Naive thymus-derived CD4-positive, alpha-beta T cell (primary cell): ENCODE measurements at regions of chr4 and their contacts with region 1.

Region 1: DNA sequence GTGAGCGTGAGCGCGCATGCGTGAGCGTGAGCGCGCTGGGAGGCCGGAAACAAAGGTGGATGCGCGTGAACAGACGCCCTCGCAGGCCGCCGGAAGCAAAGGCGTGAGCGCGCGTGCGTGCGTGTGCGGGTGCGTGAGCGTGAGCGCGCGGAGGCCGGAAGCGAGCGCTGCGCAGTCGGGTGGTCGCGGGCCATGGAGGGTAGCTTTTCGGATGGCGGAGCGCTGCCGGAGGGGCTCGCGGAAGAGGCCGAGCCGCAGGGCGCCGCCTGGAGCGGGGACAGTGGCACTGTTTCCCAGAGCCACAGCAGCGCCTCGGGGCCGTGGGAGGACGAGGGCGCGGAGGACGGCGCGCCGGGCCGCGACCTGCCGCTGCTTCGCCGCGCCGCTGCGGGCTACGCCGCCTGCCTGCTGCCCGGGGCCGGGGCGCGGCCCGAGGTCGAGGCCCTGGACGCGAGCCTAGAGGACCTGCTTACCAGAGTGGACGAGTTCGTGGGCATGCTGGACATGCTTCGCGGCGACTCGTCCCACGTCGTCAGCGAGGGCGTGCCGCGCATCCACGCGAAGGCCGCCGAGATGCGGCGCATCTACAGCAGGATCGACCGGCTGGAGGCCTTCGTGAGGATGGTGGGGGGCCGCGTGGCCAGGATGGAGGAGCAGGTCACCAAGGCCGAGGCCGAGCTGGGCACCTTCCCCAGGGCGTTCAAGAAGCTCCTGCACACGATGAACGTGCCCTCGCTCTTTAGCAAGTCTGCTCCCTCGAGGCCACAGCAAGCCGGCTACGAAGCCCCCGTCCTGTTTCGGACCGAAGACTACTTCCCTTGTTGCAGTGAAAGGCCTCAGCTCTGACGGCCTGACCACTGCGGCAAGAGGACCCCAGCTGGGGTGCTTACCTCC is at the start of gene BLOC1S4:
- DNase-seq: peak; percentile 86 to 95 (median 91)
- ATAC-seq: peak; percentile 92
- H3K4me3 ChIP-seq: peak within 1 kb of the TSS; percentile 86
- H3K4me3 Mint-ChIP-seq: peak within 1 kb of the TSS; percentile 89 to 99 (median 95)
- H3K27ac ChIP-seq: peak within 1 kb of the TSS; percentile 90
- H3K27ac Mint-ChIP-seq: peak within 1 kb of the TSS; percentile 94 to 100 (median 97)
- H3K4me1 ChIP-seq: peaks cover 19 to 20% of the 10 kb centered on the region in 2 donors
- H3K4me1 Mint-ChIP-seq: peaks cover 22 to 52% (median 36%) of the 10 kb centered on the region in 7 donors
- H3K27me3 ChIP-seq: no peaks in the 10 kb centered on the region
- H3K27me3 Mint-ChIP-seq: peaks cover 0 to 8% (median 0%) of the 10 kb centered on the region in 5 donors
- total RNA-seq, gene BLOC1S4: 18.7 to 45.9 (median 25.0) TPM

Region 2: DNA sequence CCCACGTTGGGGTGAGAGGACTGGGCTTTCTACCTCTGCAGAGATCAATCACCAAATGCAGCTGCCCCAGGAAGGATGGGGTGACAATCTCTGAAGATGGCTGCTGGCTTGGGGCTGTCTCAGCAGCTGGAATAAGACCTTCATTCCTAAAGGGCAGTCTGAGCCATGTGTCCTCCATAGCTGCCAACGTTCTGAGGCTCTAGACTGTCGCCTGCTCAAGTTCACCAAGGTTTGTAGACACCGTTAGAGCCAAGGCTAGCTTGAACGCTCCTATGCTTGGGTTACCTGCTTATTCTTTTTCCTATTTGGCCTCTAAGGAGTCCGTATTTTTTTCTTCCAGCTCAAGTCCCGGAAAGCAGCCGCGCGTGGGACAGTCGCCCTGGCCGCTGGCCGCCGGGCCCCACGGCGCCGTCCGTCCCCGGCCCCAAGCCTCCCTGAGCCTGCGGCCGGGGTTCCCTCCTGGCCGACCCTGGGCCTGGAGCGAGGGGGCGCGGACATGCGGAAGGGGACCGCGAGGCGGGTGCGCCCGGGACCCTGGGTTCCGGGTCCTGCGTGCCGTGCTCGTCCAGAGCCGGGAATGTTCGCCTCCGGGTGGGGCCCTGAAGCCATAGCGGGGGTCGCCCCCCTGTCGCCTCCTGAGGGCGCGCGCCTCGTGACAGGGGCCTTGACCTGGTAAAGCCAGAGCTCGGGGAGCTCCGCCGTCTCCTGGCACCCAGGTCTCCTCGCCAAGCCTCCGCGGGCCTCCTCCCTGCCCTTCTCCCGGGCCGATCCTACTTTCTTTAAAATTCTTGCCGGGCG is 52.5 kb before region 1 on chr4:
- CTCF ChIA-PET with region 1: no interaction called
- POLR2A ChIA-PET with region 1: interaction called, 15 read pairs
- intact Hi-C with region 1: no loop called
- DNase-seq: no peak
- ATAC-seq: no peak
- H3K4me3 ChIP-seq: peak overlapping the region; percentile 35
- H3K4me3 Mint-ChIP-seq: peak overlapping the region in 7 of 10 donors; percentile 12 to 81 (median 38)
- H3K27ac ChIP-seq: no peak overlapping the region
- H3K27ac Mint-ChIP-seq: peak overlapping the region in 1 of 9 donors; percentile 55
- H3K4me1 ChIP-seq: peaks cover 4 to 12% of the 10 kb centered on the region in 2 donors
- H3K4me1 Mint-ChIP-seq: peaks cover 0 to 9% (median 5%) of the 10 kb centered on the region in 7 donors
- H3K27me3 ChIP-seq: peaks cover 0 to 2% of the 10 kb centered on the region in 2 donors
- H3K27me3 Mint-ChIP-seq: peaks cover 0 to 49% (median 0%) of the 10 kb centered on the region in 5 donors

Region 3: DNA sequence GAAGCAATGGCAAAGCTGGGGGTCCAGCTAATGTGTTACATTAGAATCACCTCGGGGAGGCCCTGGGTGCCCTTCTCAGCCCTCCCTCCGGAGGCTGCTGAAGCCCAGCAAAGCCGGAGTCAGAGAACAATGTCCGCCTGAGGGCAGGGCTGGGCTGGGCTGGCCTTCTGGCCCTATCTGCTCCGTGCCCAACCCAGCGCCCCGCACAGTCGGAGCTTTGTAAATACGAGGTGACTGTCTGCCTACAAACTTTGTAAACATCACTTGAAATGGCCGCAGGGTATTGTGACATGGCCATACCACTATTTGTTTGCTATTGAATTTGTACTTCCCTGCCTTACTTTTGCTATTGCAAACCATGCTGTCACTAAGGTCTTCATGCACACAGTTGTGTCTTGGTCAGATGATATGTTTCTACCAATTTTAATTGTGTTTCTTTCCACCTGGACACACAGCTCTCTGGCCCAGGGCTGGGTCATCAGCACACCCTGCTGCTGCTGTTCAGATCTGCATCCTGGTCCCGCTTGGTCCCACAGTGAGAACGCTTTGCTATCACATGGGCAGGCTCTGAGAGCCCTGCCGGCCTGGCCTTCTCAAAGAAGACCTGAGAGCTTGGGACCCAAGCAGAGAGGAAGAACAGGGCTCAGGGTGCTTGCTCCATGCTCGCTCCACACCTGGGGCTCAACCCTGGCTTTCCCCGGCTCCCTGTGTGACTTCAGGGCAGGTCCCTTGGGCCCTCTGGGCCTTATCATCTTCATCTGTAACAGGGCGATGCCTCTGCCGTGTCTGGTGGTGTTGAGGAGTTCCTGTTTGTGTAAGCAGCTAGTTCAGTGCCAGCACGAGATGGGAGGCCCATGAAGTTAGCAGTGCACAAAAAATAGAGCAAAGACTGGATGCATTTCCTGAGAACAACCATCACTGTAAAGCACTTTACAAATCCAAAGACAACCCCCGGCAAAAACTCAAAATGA is 20.3 kb before region 1 on chr4:
- CTCF ChIA-PET with region 1: interaction called, 6 read pairs
- POLR2A ChIA-PET with region 1: interaction called, 552 read pairs
- intact Hi-C with region 1: loop called in 1 of 2 experiments (anchors 1 kb)
- DNase-seq: peak in 8 of 9 donors; percentile 53 to 82 (median 75)
- ATAC-seq: peak; percentile 89
- H3K4me3 ChIP-seq: peak overlapping the region; percentile 17
- H3K4me3 Mint-ChIP-seq: peak overlapping the region; percentile 42 to 84 (median 74)
- H3K27ac ChIP-seq: peak overlapping the region; percentile 77
- H3K27ac Mint-ChIP-seq: peak overlapping the region; percentile 93 to 99 (median 97)
- H3K4me1 ChIP-seq: peaks cover 84 to 85% of the 10 kb centered on the region in 2 donors
- H3K4me1 Mint-ChIP-seq: peaks cover 59 to 89% (median 82%) of the 10 kb centered on the region in 7 donors
- H3K27me3 ChIP-seq: no peaks in the 10 kb centered on the region
- H3K27me3 Mint-ChIP-seq: no peaks in the 10 kb centered on the region

Region 4: GRCh38 chr4:6974138-6974848 is 258.0 kb after region 1 on chr4:
- CTCF ChIA-PET with region 1: interaction called, 9 read pairs
- POLR2A ChIA-PET with region 1: interaction called, 4 read pairs
- intact Hi-C with region 1: loop called in 1 of 2 experiments (anchors 5 kb)
- DNase-seq: peak; percentile 55 to 82 (median 74)
- ATAC-seq: peak; percentile 100
- H3K4me3 ChIP-seq: no peak overlapping the region
- H3K4me3 Mint-ChIP-seq: peak overlapping the region in 3 of 10 donors; percentile 11 to 45 (median 18)
- H3K27ac ChIP-seq: no peak overlapping the region
- H3K27ac Mint-ChIP-seq: peak overlapping the region in 5 of 9 donors; percentile 43 to 86 (median 69)
- H3K4me1 ChIP-seq: peaks cover 0 to 9% of the 10 kb centered on the region in 2 donors
- H3K4me1 Mint-ChIP-seq: peaks cover 5 to 38% (median 22%) of the 10 kb centered on the region in 7 donors
- H3K27me3 ChIP-seq: no peaks in the 10 kb centered on the region
- H3K27me3 Mint-ChIP-seq: no peaks in the 10 kb centered on the region

Region 5: DNA sequence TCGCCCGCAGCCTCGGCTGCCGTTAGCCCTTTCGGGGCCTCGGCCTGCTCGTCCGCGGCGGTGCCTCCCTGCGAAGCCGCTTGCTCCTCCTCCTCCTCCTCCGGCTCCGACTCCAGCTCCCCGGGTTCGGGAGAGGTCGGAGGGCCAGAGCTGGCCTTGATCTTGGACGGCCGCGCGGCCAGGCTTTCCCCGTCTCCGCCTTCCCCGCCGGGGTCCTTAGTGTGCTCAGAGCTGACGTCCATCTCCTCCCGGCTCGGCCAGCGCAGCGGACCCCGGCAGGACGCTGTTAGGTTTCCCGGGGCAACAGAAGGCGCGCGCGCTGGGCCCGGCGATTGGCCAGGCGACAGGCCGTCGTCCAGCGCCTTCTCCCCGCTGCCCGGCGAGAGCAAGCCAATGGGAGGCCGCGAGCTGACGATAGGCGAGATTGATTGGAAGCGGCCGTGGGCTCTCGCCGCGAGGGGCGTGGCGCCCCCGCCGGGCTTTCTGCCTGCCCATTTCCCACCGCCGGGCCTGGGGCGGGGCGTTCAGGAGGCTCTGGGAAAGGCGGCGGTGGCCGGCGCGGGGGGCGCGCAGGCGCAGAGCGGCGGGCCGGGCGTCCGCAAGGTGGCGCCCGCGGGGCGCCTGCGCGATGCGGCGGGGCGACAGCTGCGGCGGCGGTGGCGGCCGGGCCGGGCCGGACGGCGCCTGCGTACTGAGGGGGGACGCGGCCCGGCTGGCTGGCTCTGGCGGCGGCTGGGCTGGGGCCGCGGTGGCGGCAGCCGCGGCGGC is 326.6 kb after region 1 on chr4 and contains the start of gene TADA2B:
- CTCF ChIA-PET with region 1: interaction called, 3 read pairs
- POLR2A ChIA-PET with region 1: interaction called, 6 read pairs
- intact Hi-C with region 1: loop called in 1 of 2 experiments (anchors 1 kb)
- DNase-seq: peak; percentile 79 to 99 (median 88)
- ATAC-seq: peak; percentile 89
- H3K4me3 ChIP-seq: peak within 1 kb of the TSS; percentile 84
- H3K4me3 Mint-ChIP-seq: peak within 1 kb of the TSS; percentile 90 to 95 (median 92)
- H3K27ac ChIP-seq: peak within 1 kb of the TSS; percentile 85
- H3K27ac Mint-ChIP-seq: peak within 1 kb of the TSS; percentile 80 to 92 (median 89)
- H3K4me1 ChIP-seq: peaks cover 33 to 40% of the 10 kb centered on the region in 2 donors
- H3K4me1 Mint-ChIP-seq: peaks cover 38 to 58% (median 52%) of the 10 kb centered on the region in 7 donors
- H3K27me3 ChIP-seq: no peaks in the 10 kb centered on the region
- H3K27me3 Mint-ChIP-seq: peaks cover 0 to 15% (median 0%) of the 10 kb centered on the region in 5 donors
- total RNA-seq, gene TADA2B: 26.8 to 49.0 (median 41.5) TPM